ENCODE measurements at regions of chr1 and their contacts with region 1.

Region 1: DNA sequence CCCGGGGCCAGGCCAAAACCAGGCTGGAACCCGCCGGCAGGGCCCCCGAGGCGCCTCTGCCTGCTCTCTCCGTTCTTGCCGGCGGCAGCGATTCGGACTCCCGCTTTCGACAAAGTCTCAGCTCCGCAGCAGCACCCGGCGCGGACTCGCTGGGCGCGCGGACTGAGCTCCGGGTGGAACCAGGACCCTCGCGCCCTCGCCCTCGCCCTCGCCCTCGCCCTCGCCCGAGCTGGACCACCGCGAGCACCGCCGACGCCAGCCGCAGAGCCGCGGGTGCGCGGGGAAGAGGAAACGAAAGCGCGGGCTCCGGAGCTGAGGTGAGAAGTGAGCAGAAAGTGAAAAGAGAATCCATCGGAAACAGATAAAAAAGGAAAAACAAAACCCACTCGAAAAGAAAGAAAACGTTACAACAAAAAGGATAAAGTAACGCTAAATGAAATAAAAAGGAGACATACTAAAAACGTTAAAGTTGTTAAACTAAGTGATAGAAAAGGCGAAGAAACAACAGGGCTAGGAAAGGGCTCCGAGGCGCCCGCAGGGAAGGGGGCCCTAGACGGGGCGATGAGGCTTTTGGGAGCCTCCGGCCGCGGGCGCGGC is 64.9 kb downstream of the MEF2D start:
- DNase-seq: peak; percentile 43
- ATAC-seq: peak; percentile 59
- H3K4me3 Mint-ChIP-seq: peak overlapping the region; percentile 82
- H3K27ac Mint-ChIP-seq: no peak overlapping the region
- H3K4me1 Mint-ChIP-seq: peaks cover 27% of the 10 kb centered on the region
- H3K27me3 Mint-ChIP-seq: peaks cover 78% of the 10 kb centered on the region
- CTCF ChIP-seq: no peak

Region 2: DNA sequence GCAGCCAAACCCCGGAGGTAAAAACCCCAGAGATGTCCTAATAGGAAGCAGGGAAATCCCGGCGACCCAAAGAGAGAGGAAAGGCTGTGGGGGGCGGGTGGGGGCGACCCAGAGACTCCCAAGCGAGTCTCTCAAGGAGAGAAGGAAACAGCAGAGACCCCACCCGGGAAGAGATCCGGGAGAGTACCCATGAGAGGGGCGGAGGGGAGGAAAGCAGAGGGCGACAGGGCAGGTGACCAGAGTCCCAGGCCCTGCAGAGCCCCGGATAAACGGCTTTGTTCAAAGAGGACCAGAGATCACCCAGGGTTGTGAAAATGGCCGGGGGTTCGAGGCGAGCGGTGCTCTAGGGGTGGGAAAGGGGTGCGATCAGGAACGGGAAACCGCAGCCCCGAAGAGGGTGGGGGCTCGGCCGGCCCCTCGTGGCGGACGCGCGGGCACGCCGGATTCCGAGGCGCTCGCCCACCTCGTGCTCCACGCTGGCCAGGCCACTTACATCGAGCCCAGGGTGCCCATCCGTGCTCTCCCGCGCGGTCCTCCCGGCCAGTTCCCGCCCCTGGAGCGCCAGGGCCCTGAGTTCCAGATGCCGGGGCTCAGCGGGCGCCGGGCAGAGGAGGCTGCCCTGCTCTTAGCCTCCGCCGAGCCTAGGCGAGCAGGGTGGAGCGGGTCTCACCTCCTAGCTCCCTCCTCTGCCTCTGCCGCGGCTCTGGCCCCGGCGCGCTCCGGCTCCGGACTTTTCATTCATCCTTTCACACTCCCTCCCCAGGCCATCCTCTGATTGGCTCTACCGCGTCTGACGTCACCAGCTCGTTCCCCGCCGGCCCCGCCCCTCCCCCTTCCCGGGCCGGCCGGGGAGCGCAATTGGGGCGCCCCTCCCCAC is 14.3 kb before region 1 on chr1:
- CTCF ChIA-PET with region 1: interaction called, 4 read pairs
- POLR2A ChIA-PET with region 1: interaction called, 3 read pairs
- intact Hi-C with region 1: loop called (anchors 2 kb)
- DNase-seq: peak; percentile 50
- ATAC-seq: peak; percentile 73
- H3K4me3 Mint-ChIP-seq: peak overlapping the region; percentile 89
- H3K27ac Mint-ChIP-seq: no peak overlapping the region
- H3K4me1 Mint-ChIP-seq: peaks cover 23% of the 10 kb centered on the region
- H3K27me3 Mint-ChIP-seq: peaks cover 74% of the 10 kb centered on the region
- CTCF ChIP-seq: no peak

Region 3: GRCh38 chr1:156677616-156678596 is 242.3 kb after region 1 on chr1:
- CTCF ChIA-PET with region 1: no interaction called
- POLR2A ChIA-PET with region 1: no interaction called
- intact Hi-C with region 1: loop called (anchors 5 kb)
- DNase-seq: no peak
- ATAC-seq: peak; percentile 49
- H3K4me3 Mint-ChIP-seq: peak overlapping the region; percentile 32
- H3K27ac Mint-ChIP-seq: no peak overlapping the region
- H3K4me1 Mint-ChIP-seq: peaks cover 27% of the 10 kb centered on the region
- H3K27me3 Mint-ChIP-seq: peaks cover 69% of the 10 kb centered on the region
- CTCF ChIP-seq: no peak

Measured in activated B cell treated with CpG ODN at 0.5 μM for 24 hours (primary cell).